Left ventricle myocardium inferior (tissue), 1 donor: ENCODE measurements at regions of chr10 and their contacts with region 1.

Region 1: GRCh38 chr10:91632671-91633550 is at the start of gene PPP1R3C:
- DNase-seq: peak; percentile 90
- H3K4me3 ChIP-seq: peak within 1 kb of the TSS; percentile 75
- H3K27ac ChIP-seq: peak within 1 kb of the TSS; percentile 91
- H3K4me1 ChIP-seq: peaks cover 62% of the 10 kb centered on the region
- H3K27me3 ChIP-seq: no peaks in the 10 kb centered on the region
- CTCF ChIP-seq: peak; percentile 50
- total RNA-seq, gene PPP1R3C: 236 TPM

Region 2: DNA sequence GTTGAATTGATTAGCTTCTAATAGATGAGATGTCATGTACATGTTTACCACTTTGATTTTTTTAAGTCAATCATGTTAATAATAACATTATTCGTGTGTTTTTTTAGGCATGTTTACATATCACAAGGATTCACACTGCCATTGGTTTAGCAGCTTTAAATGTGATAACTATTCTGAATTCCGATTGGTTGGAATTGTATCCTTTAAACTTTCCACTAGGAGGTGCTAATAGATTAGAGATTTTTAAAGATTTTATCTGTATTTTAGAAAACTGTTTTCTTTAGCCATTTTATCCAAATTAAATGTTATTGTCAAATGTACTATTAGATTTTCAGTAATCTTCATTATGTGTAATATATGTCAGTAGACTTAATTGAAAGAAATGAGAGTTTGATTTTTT is 139.6 kb before region 1 on chr10:
- intact Hi-C with region 1: loop called (anchors 5 kb)
- DNase-seq: no peak
- H3K4me3 ChIP-seq: no peak overlapping the region
- H3K27ac ChIP-seq: no peak overlapping the region
- H3K4me1 ChIP-seq: peaks cover 5% of the 10 kb centered on the region
- H3K27me3 ChIP-seq: no peaks in the 10 kb centered on the region
- CTCF ChIP-seq: peak; percentile 65

Region 3: DNA sequence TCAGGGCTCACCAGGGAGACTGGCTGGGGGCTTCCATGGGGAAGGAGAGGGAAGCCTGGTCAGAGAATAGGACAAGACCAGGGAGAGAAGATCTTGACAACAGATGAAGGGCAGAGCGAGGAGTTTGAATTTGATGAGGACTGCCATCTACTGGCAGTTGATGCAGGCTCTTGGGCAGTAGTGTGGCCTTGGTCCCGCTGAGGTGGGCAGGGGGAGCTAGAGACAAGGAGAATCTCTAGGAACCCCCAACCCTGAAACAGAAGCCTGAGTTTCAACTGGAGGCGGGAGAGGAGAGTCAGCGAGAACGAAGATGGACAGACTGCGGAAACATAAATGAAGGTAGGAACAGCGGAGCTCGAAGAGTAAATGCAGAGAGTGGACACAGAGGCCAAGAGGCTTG is 81.1 kb before region 1 on chr10:
- intact Hi-C with region 1: loop called (anchors 5 kb)
- DNase-seq: peak; percentile 37
- H3K4me3 ChIP-seq: peak overlapping the region; percentile 42
- H3K27ac ChIP-seq: peak overlapping the region; percentile 56
- H3K4me1 ChIP-seq: peaks cover 29% of the 10 kb centered on the region
- H3K27me3 ChIP-seq: no peaks in the 10 kb centered on the region
- CTCF ChIP-seq: peak; percentile 75

Region 4: DNA sequence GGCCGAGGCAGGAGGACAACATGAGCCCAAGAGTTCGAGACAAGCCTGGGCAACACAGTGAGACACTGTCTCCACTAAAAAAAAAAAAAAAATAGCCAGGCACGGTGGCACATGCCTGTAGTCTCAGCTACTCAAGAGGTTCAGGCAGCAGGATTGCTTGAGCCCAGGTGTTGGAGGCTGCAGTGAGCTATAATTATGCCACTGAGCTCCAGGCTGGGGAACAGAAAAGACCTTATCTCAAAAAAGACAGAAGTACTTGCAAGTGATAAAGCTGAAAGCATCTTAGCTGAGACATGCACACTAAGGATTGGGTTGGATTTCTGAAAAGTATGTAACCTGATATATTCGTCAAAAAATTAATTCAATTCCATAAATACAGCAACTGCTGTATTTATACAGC is 68.4 kb before region 1 on chr10:
- intact Hi-C with region 1: loop called (anchors 5 kb)
- DNase-seq: no peak
- H3K4me3 ChIP-seq: no peak overlapping the region
- H3K27ac ChIP-seq: peak overlapping the region; percentile 48
- H3K4me1 ChIP-seq: peaks cover 25% of the 10 kb centered on the region
- H3K27me3 ChIP-seq: no peaks in the 10 kb centered on the region
- CTCF ChIP-seq: no peak